Endothelial cell of umbilical vein (primary cell): ENCODE measurements at regions of chr11 and their contacts with region 1.

Region 1: GRCh38 chr11:126211235-126212088 is at the starts of genes FAM118B and RPUSD4:
- DNase-seq: peak; percentile 98
- H3K4me3 ChIP-seq: peak within 1 kb of the TSS; percentile 65 to 73 (median 72)
- H3K27ac ChIP-seq: peak within 1 kb of the TSS; percentile 36
- H3K4me1 ChIP-seq: peaks cover 17% of the 10 kb centered on the region
- H3K27me3 ChIP-seq: no peaks in the 10 kb centered on the region
- CTCF ChIP-seq: no peak
- POLR2A ChIP-seq: peak; percentile 98
- total RNA-seq, gene FAM118B: 35.3 and 35.8 TPM in 2 replicates
- total RNA-seq, gene RPUSD4: 36.5 and 40.8 TPM in 2 replicates

Region 2: DNA sequence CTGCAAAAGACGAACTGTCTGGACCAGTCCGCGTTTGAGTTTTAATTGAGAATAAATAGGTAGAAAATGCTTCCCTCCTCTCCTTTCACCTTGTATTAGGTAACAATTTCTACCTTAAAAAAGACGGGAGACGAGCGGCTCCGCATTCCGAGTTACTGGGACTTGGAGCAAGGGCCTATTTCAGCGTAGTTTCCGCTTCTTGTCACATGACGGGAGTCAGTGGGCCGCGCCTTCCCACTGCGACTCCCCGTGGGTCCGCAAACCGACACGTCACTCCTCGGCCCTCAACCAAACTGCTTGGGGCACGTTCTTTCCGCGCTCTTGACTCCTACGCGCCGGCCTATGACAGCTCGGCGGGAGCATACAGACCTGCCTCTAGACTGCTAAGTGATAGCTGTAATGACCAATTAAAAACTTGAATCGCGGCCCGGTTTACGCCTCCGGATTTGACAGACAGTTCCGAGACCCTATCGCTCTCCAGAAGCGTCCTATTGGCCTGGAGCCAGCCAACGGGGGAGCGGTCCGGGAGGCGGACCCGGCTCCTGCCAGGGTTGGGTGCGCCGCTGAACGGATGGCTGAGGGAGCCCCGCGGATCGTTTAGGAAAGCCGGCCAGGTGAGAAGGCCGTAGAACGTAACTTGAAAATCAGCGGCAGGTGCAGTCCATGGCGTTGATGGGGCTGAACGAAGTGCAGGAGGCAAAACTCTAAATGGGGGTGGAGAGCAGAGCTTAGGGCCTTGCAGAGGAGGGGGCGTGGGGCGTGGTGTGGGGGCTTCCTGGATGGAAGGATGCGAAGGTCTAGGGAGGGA is 619.0 kb before region 1 on chr11 and contains the start of gene STT3A:
- CTCF ChIA-PET with region 1: no interaction called
- POLR2A ChIA-PET with region 1: no interaction called
- dilution Hi-C with region 1: no loop called
- intact Hi-C with region 1: loop called (anchors 1 kb)
- DNase-seq: peak; percentile 100
- H3K4me3 ChIP-seq: peak within 1 kb of the TSS; percentile 63 to 96 (median 79)
- H3K27ac ChIP-seq: peak within 1 kb of the TSS; percentile 79
- H3K4me1 ChIP-seq: peaks cover 17% of the 10 kb centered on the region
- H3K27me3 ChIP-seq: no peaks in the 10 kb centered on the region
- CTCF ChIP-seq: no peak
- POLR2A ChIP-seq: peak; percentile 92
- total RNA-seq, gene STT3A: 216 and 236 TPM in 2 replicates

Region 3: GRCh38 chr11:126229858-126230540 is 18.5 kb after region 1 on chr11:
- CTCF ChIA-PET with region 1: interaction called, 6 read pairs
- POLR2A ChIA-PET with region 1: no interaction called
- dilution Hi-C with region 1: no loop called
- intact Hi-C with region 1: loop called (anchors 1 kb)
- DNase-seq: peak; percentile 54
- H3K4me3 ChIP-seq: no peak overlapping the region
- H3K27ac ChIP-seq: peak overlapping the region; percentile 61
- H3K4me1 ChIP-seq: peaks cover 30% of the 10 kb centered on the region
- H3K27me3 ChIP-seq: no peaks in the 10 kb centered on the region
- CTCF ChIP-seq: no peak
- POLR2A ChIP-seq: no peak

Region 4: DNA sequence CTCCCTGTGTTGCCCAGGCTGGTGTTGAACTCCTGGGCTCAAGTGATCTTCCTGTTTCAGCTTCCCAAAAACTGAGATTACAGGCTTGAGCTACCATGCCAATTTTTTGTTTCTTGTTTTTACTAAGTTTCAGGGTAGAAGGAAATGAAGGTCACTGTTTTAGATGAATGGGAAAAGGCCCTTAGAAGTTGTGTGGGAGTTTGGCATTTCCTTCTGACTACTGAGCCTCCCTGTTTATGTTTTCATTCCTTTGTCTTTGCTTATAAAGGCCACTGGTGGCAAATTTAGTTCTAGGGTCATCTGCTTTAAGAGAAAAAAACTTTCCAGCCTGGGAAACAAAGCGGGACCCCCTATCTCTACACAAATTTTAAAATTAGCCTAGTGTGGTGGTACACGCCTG is 35.2 kb after region 1 on chr11:
- CTCF ChIA-PET with region 1: interaction called, 4 read pairs
- POLR2A ChIA-PET with region 1: no interaction called
- dilution Hi-C with region 1: no loop called
- intact Hi-C with region 1: loop called (anchors 2 kb)
- DNase-seq: peak; percentile 92
- H3K4me3 ChIP-seq: no peak overlapping the region
- H3K27ac ChIP-seq: peak overlapping the region; percentile 73
- H3K4me1 ChIP-seq: peaks cover 13% of the 10 kb centered on the region
- H3K27me3 ChIP-seq: no peaks in the 10 kb centered on the region
- CTCF ChIP-seq: no peak
- POLR2A ChIP-seq: no peak

Region 5: GRCh38 chr11:126268708-126269579 is 57.5 kb after region 1 on chr11 and contains the starts of genes FOXRED1 and SRPRA:
- CTCF ChIA-PET with region 1: interaction called, 10 read pairs
- POLR2A ChIA-PET with region 1: no interaction called
- dilution Hi-C with region 1: no loop called
- intact Hi-C with region 1: loop called (anchors 1 kb)
- DNase-seq: peak; percentile 99
- H3K4me3 ChIP-seq: peak within 1 kb of the TSS; percentile 81 to 92 (median 87)
- H3K27ac ChIP-seq: peak within 1 kb of the TSS; percentile 82
- H3K4me1 ChIP-seq: peaks cover 12% of the 10 kb centered on the region
- H3K27me3 ChIP-seq: no peaks in the 10 kb centered on the region
- CTCF ChIP-seq: no peak
- POLR2A ChIP-seq: peak; percentile 92
- total RNA-seq, gene FOXRED1: 31.0 and 33.5 TPM in 2 replicates
- total RNA-seq, gene SRPRA: 104 and 106 TPM in 2 replicates

Region 6: DNA sequence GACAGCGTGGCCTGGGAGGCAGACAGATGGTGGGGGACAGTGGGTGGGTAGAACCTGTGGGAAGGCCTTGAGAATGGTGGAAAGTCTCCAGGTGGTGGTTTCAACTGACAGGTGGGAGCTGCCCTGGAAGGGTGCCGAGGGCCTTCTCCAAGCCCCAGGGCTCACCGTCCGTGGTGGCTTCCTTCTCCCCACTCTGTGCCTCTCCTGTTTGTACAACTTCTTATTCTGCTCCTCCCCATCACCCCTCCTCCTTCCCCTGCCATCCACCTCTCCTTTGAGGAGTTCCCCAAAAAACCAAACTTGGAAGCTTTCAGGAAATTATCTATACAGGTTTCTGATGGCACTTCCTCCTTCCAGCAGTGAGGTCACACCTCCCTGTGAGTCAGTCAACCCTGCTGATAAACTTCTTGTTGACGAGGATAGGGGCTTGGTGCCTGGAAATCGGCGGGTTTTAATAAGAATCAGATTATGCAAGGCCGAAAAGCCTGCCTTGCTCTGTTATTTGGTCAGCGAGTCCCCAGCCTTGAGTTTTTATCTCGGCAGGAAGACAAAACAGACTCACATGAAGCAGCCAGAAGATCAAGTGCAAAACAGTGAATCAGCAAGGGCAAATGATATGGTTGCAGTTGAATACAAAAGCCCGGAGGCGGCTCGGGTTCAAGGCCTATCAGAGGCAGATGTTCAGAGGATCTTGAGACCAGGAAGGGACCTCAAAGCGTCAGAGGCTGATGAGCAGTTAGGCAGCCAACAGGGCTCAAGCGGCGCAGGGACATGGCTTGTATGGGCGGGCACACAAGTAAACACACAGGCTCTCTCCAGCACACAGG is 134.5 kb after region 1 on chr11:
- CTCF ChIA-PET with region 1: no interaction called
- POLR2A ChIA-PET with region 1: no interaction called
- dilution Hi-C with region 1: no loop called
- intact Hi-C with region 1: loop called (anchors 5 kb)
- DNase-seq: peak; percentile 59
- H3K4me3 ChIP-seq: no peak overlapping the region
- H3K27ac ChIP-seq: peak overlapping the region; percentile 77
- H3K4me1 ChIP-seq: peaks cover 50% of the 10 kb centered on the region
- H3K27me3 ChIP-seq: no peaks in the 10 kb centered on the region
- CTCF ChIP-seq: no peak
- POLR2A ChIP-seq: no peak

Region 7: GRCh38 chr11:126510621-126511370 is 299.3 kb after region 1 on chr11:
- CTCF ChIA-PET with region 1: no interaction called
- POLR2A ChIA-PET with region 1: no interaction called
- dilution Hi-C with region 1: no loop called
- intact Hi-C with region 1: no loop called
- DNase-seq: no peak
- H3K4me3 ChIP-seq: no peak overlapping the region
- H3K27ac ChIP-seq: no peak overlapping the region
- H3K4me1 ChIP-seq: no peaks in the 10 kb centered on the region
- H3K27me3 ChIP-seq: no peaks in the 10 kb centered on the region
- CTCF ChIP-seq: no peak
- POLR2A ChIP-seq: no peak